ENCODE measurements at regions of chr19 and their contacts with region 1.

Region 1: DNA sequence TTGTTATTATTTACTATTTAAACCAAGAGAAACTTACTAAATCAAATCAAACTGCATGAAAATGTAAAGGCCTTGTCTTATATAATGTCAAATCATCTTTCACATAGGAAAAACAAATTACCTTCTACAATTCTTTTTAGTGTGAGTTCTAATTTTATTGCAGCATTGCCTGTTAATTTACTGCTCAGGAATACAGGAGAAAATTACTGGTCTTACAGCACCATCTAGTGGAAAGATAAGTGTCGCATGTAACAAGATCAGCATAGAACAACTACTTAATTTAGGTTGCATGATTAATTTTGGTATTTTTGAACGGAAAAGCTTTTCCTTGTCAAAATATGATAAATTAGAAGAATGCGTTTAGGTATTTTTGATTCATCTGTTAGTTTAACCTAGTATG is 502.7 kb downstream of the UQCRFS1 start:
- DNase-seq: no peak
- ATAC-seq: no peak

Region 2: GRCh38 chr19:27966390-27966816 is 743.9 kb before region 1 on chr19:
- intact Hi-C with region 1: loop called (anchors 10 kb)
- DNase-seq: no peak
- ATAC-seq: no peak

Measured in Right ventricle myocardium superior (tissue), 1 donor.